ENCODE measurements at regions of chr21 and their contacts with region 1.

Region 1: DNA sequence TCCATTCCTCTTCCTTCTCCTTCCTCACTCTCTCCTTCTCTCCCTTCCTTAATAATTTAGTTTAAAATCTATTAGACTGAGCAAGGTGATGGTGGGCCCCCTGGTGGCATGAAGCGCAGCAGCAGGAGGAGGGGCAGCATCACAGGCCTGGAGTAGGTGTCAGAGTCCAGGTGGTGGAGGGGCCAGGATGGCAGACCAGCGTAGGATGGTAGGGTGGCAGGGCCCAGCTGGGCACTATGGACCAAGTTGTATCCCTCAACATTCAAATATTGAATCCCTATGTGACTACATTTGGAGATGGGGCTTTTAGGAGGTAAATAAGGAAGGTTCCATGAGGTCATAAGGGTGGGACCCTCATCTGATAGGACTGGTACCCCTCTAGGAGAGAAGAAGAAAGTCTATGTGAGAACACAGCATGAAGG is 61.0 kb downstream of the WDR4 start:
- DNase-seq: peak; percentile 92
- H3K4me3 ChIP-seq: no peak overlapping the region
- H3K27ac ChIP-seq: no peak overlapping the region
- H3K4me1 ChIP-seq: no peaks in the 10 kb centered on the region
- H3K27me3 ChIP-seq: peaks cover 0 to 38% (median 0%) of the 10 kb centered on the region in 4 donors
- CTCF ChIP-seq: peak; percentile 85 to 95 (median 89)
- EP300 ChIP-seq: no peak
- POLR2A ChIP-seq: no peak

Region 2: GRCh38 chr21:42593007-42593806 is 225.1 kb before region 1 on chr21:
- intact Hi-C with region 1: loop called (anchors 5 kb)
- DNase-seq: no peak
- H3K4me3 ChIP-seq: peak overlapping the region; percentile 3 to 35 (median 16)
- H3K27ac ChIP-seq: no peak overlapping the region
- H3K4me1 ChIP-seq: peaks cover 7 to 21% (median 12%) of the 10 kb centered on the region in 4 donors
- H3K27me3 ChIP-seq: peaks cover 0 to 27% (median 0%) of the 10 kb centered on the region in 4 donors
- CTCF ChIP-seq: peak; percentile 63 to 89 (median 71)
- EP300 ChIP-seq: no peak
- POLR2A ChIP-seq: no peak

Region 3: GRCh38 chr21:42652527-42653230 is 165.7 kb before region 1 on chr21:
- intact Hi-C with region 1: loop called (anchors 5 kb)
- DNase-seq: no peak
- H3K4me3 ChIP-seq: peak overlapping the region; percentile 68 to 91 (median 74)
- H3K27ac ChIP-seq: peak overlapping the region; percentile 78 to 86 (median 84)
- H3K4me1 ChIP-seq: peaks cover 29 to 58% (median 55%) of the 10 kb centered on the region in 4 donors
- H3K27me3 ChIP-seq: peaks cover 0 to 4% (median 2%) of the 10 kb centered on the region in 4 donors
- CTCF ChIP-seq: peak; percentile 57 to 76 (median 70)
- EP300 ChIP-seq: no peak
- POLR2A ChIP-seq: no peak